ENCODE measurements at regions of chr18 and their contacts with region 1.

Region 1: GRCh38 chr18:76803814-76804213 is 18.5 kb upstream of the ZNF236 start:
- DNase-seq: peak; percentile 81
- ATAC-seq: peak; percentile 77
- H3K4me3 Mint-ChIP-seq: no peak overlapping the region
- H3K27ac Mint-ChIP-seq: no peak overlapping the region
- H3K4me1 Mint-ChIP-seq: peaks cover 14% of the 10 kb centered on the region
- H3K27me3 Mint-ChIP-seq: peaks cover 4% of the 10 kb centered on the region

Region 2: GRCh38 chr18:76398896-76399612 is 404.8 kb before region 1 on chr18:
- CTCF ChIA-PET with region 1: interaction called, 10 read pairs
- POLR2A ChIA-PET with region 1: no interaction called
- DNase-seq: peak; percentile 81
- ATAC-seq: peak; percentile 91
- H3K4me3 Mint-ChIP-seq: no peak overlapping the region
- H3K27ac Mint-ChIP-seq: no peak overlapping the region
- H3K4me1 Mint-ChIP-seq: peaks cover 3% of the 10 kb centered on the region
- H3K27me3 Mint-ChIP-seq: peaks cover 5% of the 10 kb centered on the region

Region 3: DNA sequence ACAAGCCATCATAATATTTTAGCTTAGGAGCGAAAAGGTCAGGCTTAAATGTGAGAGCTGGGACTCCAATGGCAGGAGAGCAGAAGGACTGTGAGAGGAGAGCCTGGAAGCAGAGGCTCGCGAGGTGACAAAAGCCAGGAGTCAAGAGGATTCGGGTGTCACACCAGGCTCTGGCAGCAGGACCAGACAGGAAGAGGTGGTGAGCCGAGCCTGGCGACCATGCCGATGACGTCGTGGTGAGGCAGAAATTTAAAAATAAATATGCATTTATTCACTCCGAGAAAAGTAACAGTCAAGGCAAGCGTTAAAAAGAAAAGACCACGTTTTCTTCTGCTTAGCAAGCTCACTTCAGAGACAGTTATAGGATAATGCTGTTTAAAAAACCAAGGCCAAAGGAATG is 12.7 kb before region 1 on chr18:
- CTCF ChIA-PET with region 1: interaction called, 19 read pairs
- POLR2A ChIA-PET with region 1: no interaction called
- DNase-seq: no peak
- ATAC-seq: no peak
- H3K4me3 Mint-ChIP-seq: no peak overlapping the region
- H3K27ac Mint-ChIP-seq: no peak overlapping the region
- H3K4me1 Mint-ChIP-seq: peaks cover 8% of the 10 kb centered on the region
- H3K27me3 Mint-ChIP-seq: peaks cover 16% of the 10 kb centered on the region

Region 4: DNA sequence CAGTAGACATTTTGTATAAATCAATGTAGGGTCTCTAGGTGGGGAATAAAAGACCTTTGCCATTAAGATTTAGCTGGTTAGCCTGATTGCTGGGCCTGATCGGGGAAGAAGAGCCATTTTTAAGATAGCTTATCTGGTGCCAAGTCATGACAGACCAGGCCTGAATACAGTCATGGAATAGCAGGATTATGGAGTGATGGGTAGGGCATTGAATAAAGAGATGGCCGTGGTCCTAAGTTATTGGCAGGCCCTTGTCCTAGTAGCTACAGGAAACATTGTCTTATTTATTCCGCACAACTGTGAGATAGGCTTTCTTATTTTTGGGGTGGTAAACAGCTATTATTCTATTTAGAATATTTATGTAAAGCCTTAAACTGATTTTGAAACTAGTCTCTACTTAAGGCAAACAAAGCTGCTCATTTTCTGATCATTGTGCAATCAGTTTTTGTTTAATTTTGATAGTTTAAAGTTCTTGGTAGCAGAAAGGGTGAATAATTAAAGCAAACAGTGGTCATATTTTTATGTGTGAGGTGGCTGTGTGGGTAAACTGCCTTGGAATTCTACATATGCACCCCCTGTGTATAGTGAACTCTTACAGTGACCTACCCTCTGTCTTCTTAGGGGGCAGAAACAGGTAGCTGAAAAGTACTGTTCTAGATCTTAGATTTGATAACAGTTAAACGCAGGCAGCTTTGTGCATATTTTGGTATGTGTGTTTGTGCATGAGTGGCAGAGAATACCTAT is 41.1 kb after region 1 on chr18:
- CTCF ChIA-PET with region 1: interaction called, 11 read pairs
- POLR2A ChIA-PET with region 1: no interaction called
- DNase-seq: no peak
- ATAC-seq: no peak
- H3K4me3 Mint-ChIP-seq: no peak overlapping the region
- H3K27ac Mint-ChIP-seq: no peak overlapping the region
- H3K4me1 Mint-ChIP-seq: peaks cover 20% of the 10 kb centered on the region
- H3K27me3 Mint-ChIP-seq: no peaks in the 10 kb centered on the region

Region 5: DNA sequence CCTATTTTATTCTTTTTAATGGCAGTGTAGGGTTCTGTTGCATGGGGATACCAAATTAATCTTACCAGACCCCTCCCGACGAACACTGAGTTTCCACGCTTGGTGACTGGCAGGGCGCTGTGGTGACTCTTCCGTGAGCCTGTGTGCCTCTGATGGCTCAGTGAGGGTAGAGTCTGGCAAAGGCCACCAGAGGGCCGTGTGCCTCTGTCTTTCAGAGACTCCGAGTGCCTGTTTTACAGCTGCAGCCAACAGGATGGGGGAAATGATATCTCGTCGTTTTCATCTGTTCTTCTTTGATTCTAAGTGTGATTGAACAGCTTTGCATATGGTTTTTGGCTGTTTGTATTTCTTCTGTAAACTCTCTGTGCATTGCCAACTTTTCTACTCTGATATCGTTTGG is 118.3 kb after region 1 on chr18:
- CTCF ChIA-PET with region 1: interaction called, 13 read pairs
- POLR2A ChIA-PET with region 1: no interaction called
- DNase-seq: peak; percentile 67
- ATAC-seq: peak; percentile 98
- H3K4me3 Mint-ChIP-seq: no peak overlapping the region
- H3K27ac Mint-ChIP-seq: no peak overlapping the region
- H3K4me1 Mint-ChIP-seq: peaks cover 12% of the 10 kb centered on the region
- H3K27me3 Mint-ChIP-seq: no peaks in the 10 kb centered on the region

Region 6: DNA sequence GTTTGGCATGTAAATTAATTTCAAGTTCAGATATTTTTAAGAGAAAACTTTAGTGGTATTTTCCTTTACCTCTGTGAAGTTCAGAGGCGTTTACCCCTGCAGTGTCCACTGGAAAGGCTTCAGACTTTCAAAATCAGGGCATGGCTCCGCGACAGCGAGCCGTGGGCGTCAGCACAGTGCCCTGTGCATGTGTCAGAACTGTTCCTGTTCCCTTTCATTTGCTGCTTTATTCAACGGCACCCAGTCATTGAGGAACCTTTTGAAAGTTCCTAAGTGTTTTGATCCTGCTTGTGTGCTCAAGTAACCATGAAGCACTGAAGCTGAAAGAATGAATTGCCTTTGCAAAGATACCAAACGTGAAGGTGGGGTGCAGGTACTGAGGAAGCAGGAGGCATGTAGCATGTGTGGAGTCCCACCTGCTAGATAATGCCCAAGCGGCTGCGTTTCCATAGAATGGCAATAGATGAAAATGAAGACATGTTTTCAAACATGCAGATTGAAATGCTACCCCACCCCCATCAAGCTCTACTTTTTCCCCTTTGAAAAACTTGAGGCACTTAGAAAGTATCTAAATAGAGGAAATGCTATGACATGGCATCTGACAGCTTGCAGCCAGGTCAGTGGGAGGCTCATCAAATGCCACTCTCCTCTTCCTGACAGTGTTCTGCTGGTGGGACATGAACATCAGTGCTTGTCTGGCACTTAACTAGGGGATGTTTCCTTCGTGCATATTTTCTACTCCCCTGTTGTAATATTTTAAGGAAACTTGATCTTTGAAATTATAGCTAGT is 167.2 kb after region 1 on chr18:
- CTCF ChIA-PET with region 1: interaction called, 11 read pairs
- POLR2A ChIA-PET with region 1: no interaction called
- DNase-seq: no peak
- ATAC-seq: no peak
- H3K4me3 Mint-ChIP-seq: no peak overlapping the region
- H3K27ac Mint-ChIP-seq: no peak overlapping the region
- H3K4me1 Mint-ChIP-seq: no peaks in the 10 kb centered on the region
- H3K27me3 Mint-ChIP-seq: no peaks in the 10 kb centered on the region

Region 7: DNA sequence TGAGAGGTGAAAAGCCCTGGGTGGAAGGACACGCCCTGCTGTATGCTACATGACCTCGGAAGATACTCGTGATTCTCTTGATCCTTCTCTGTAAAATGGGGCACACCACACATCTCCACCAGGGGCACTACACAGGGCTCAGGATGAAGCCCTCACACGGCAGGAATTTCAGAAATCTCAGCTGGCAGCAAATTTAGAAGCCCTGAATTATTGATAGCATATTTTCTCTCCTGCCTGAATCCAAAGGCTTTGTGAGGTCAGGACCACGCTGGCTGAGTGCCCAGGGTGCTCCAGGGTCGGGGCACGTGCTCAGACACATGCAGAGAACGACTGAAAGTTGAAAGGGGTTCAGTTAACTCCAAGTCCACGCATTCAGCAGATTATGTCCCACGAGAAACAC is 403.7 kb after region 1 on chr18:
- CTCF ChIA-PET with region 1: interaction called, 10 read pairs
- POLR2A ChIA-PET with region 1: no interaction called
- DNase-seq: peak; percentile 55
- ATAC-seq: peak; percentile 68
- H3K4me3 Mint-ChIP-seq: no peak overlapping the region
- H3K27ac Mint-ChIP-seq: no peak overlapping the region
- H3K4me1 Mint-ChIP-seq: peaks cover 49% of the 10 kb centered on the region
- H3K27me3 Mint-ChIP-seq: no peaks in the 10 kb centered on the region